ENCODE measurements at regions of chr2 and their contacts with region 1.

Region 1: DNA sequence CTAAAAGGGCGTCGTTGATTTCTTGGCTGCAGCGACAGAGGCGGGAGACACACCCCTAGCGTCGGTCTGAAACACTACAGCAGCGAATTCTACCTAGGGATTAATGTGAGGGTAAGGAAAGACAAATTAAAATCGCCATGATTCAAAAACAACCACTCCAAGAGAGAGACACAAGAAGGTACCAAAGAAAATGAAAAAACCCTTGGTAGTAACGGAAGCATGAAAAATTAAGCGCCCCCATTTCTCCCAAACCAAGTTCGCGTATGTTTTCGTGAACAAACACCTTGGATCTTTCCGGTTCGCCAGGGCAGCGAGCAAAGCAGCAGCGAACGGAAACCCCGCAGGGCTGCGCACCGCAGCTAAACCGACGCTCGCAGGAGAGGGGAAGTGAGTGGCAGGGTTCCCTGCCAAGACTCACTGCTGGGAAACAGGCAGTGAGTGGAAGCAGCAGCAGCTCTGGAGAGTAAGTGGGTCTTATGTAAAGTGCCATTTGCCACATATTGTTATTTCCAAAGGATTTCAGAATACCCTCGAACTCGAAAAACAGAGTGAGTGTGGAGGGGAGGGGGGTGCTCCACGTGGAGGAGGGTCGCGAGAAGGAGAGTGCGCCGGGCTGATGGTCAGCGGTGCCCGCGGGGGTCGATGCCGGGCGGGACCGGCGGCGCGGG is 1.0 kb downstream of the PPP3R1 start:
- DNase-seq: peak; percentile 86
- H3K4me3 Mint-ChIP-seq: peak overlapping the region; percentile 86
- H3K27ac Mint-ChIP-seq: peak overlapping the region; percentile 97
- H3K4me1 Mint-ChIP-seq: peaks cover 35% of the 10 kb centered on the region
- H3K27me3 Mint-ChIP-seq: no peaks in the 10 kb centered on the region

Region 2: GRCh38 chr2:68062680-68063387 is 188.5 kb before region 1 on chr2 and contains the start of gene C1D:
- CTCF ChIA-PET with region 1: interaction called, 3 read pairs
- POLR2A ChIA-PET with region 1: no interaction called
- intact Hi-C with region 1: loop called (anchors 1 kb)
- DNase-seq: peak; percentile 96
- H3K4me3 Mint-ChIP-seq: peak within 1 kb of the TSS; percentile 89
- H3K27ac Mint-ChIP-seq: peak within 1 kb of the TSS; percentile 92
- H3K4me1 Mint-ChIP-seq: peaks cover 37% of the 10 kb centered on the region
- H3K27me3 Mint-ChIP-seq: no peaks in the 10 kb centered on the region
- total RNA-seq, gene C1D: 20.8 to 23.1 TPM

Region 3: DNA sequence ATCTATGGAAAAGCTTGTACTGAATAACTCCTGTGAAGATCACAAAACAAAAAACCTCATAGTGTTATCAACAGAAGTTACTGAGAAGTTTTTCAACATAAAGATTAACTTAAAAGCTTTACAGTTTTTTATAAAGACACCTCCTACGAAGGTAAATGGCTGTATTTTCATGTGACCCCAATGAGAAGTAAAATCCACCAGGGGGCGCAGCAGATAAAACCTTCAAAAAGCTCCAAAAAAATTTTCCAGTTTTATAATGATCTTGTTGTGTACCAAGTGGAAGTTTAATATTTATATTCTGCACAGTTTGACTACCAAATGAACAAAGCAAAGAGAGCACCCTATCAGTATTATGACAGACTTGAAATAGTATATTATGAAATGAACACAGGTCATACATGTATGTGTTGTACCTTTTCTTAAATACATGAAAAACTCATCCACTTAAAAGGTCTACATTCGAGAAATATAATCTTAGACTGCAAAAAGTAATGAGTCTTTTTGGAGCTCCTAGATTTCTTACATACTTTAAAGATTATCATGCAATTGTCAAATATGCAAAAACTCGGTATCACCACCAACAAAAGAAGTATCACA is 55.1 kb before region 1 on chr2:
- CTCF ChIA-PET with region 1: interaction called, 36 read pairs
- POLR2A ChIA-PET with region 1: no interaction called
- intact Hi-C with region 1: no loop called
- DNase-seq: peak; percentile 44
- H3K4me3 Mint-ChIP-seq: no peak overlapping the region
- H3K27ac Mint-ChIP-seq: no peak overlapping the region
- H3K4me1 Mint-ChIP-seq: peaks cover 53% of the 10 kb centered on the region
- H3K27me3 Mint-ChIP-seq: no peaks in the 10 kb centered on the region

Region 4: DNA sequence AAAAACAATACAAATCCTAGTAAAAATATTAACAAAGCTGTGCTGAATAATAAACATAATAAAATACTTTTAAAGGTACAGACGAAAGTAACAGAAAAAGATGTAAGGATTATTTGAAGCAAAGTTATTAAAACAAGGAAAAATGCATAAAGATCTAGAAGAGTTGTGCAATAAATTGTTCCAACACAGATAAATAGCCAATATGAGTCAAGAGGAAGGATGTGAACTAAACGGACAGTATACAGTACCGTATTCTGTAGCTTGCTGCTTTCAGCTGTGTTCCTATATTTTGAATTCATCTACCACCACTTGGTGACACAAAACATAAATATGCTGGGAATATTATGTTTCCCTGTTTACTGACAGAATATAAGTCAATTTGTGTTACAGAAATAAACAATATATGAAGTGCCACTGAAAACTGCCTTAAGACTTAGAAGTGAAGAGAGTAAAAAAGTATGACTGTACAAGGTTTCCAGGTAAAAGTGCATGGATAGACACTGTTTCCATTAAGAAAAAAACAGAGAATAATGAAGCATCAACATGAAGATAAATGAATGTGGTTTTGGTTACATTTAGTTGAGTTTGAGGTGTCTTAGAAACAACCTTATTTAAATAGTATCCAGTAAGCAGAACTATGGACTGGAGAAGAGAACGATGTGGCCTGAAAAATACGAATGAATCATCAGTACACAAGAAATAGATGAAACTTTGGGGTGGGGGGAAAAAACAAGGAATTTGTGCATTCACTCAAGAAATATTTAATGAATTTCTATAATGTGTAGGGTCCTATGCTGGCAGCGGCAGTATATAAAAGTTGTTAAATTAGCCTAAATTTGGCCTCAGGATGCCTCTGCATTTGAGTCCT is 12.1 kb before region 1 on chr2:
- CTCF ChIA-PET with region 1: interaction called, 3 read pairs
- POLR2A ChIA-PET with region 1: interaction called, 3 read pairs
- intact Hi-C with region 1: loop called (anchors 1 kb)
- DNase-seq: no peak
- H3K4me3 Mint-ChIP-seq: no peak overlapping the region
- H3K27ac Mint-ChIP-seq: peak overlapping the region; percentile 64
- H3K4me1 Mint-ChIP-seq: peaks cover 73% of the 10 kb centered on the region
- H3K27me3 Mint-ChIP-seq: no peaks in the 10 kb centered on the region

Region 5: GRCh38 chr2:68385220-68385906 is 134.0 kb after region 1 on chr2:
- CTCF ChIA-PET with region 1: no interaction called
- POLR2A ChIA-PET with region 1: no interaction called
- intact Hi-C with region 1: loop called (anchors 2 kb)
- DNase-seq: peak; percentile 62
- H3K4me3 Mint-ChIP-seq: no peak overlapping the region
- H3K27ac Mint-ChIP-seq: no peak overlapping the region
- H3K4me1 Mint-ChIP-seq: peaks cover 41% of the 10 kb centered on the region
- H3K27me3 Mint-ChIP-seq: no peaks in the 10 kb centered on the region

Measured in activated CD4-positive, alpha-beta memory T cell treated with anti-CD3 and anti-CD28 coated beads for 36 hours (primary cell).